ENCODE measurements at regions of chr20 and their contacts with region 1.

Region 1: GRCh38 chr20:44460795-44461141 is 14.9 kb upstream of the TTPAL start:
- DNase-seq: peak; percentile 66
- H3K4me3 Mint-ChIP-seq: no peak overlapping the region
- H3K27ac Mint-ChIP-seq: no peak overlapping the region
- H3K4me1 Mint-ChIP-seq: no peaks in the 10 kb centered on the region
- H3K27me3 Mint-ChIP-seq: peaks cover 2% of the 10 kb centered on the region

Region 2: GRCh38 chr20:44217342-44218092 is 243.3 kb before region 1 on chr20:
- intact Hi-C with region 1: loop called (anchors 5 kb)
- DNase-seq: peak; percentile 92
- H3K4me3 Mint-ChIP-seq: peak overlapping the region; percentile 77
- H3K27ac Mint-ChIP-seq: peak overlapping the region; percentile 63
- H3K4me1 Mint-ChIP-seq: peaks cover 30% of the 10 kb centered on the region
- H3K27me3 Mint-ChIP-seq: no peaks in the 10 kb centered on the region

Measured in activated CD4-positive, alpha-beta T cell treated with anti-CD3 and anti-CD28 coated beads, Interleukin-2, amount 10 ng/mL, durations not matched to agents 24 days and 14 days (primary cell).